ENCODE measurements at regions of chr19 and their contacts with region 1.

Region 1: DNA sequence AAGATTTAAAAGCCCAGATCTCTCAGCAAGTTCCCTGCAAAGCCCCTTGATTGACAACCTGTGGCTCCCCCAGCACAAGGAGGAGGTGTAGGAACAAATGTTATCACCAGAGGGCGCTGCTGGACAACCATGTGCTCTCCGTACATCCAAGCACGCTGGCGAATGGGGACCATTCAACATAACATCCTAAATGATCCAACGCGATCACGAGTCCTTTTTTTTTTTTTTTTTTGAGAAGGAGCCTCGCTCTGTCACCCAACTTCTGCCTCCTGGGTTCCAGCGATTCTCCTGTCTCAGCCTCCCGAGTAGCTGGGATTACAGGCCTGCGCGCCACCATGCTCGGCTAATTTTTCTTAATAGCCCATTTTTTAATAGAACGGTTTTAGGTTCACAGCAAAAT is 52.0 kb downstream of the NWD1 start:
- DNase-seq: peak; percentile 78
- ATAC-seq: peak; percentile 99
- H3K4me3 ChIP-seq: no peak overlapping the region
- H3K27ac ChIP-seq: no peak overlapping the region
- H3K4me1 ChIP-seq: no peaks in the 10 kb centered on the region
- H3K27me3 ChIP-seq: peaks cover 10% of the 10 kb centered on the region; the same call in 1 of the 2 replicates
- CTCF ChIP-seq: peak; percentile 90
- POLR2A ChIP-seq: no peak
- RAD21 ChIP-seq: peak; percentile 92

Region 2: DNA sequence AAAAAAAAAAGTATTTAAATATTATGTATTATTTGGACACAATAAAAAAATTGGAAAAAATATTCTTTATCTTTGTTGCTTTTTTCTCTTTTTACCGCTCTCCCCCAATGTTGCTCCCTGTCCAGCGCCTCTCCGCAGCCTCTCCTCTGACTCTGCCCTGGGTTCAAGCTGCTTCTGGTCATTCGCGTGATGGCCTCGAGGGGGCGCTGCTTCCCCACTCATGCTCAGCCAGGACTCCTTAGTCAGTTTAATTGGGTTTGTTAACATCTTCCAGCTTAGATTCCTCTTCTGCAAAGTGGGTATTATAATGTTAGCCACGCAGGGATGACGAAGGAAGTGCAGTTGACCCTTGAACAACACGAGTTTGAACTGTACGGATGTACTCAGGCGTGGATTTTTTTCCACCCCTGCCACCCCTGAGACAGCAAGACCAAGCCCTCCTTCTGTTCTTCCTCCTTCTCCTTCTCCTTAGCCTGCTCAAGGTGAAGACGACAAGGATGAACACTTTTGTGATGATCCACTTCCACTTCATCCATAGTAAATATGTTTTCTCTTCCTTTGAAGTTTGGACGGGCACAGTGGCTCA is 56.8 kb before region 1 on chr19:
- CTCF ChIA-PET with region 1: no interaction called
- POLR2A ChIA-PET with region 1: no interaction called
- dilution Hi-C with region 1: no loop called
- in situ Hi-C with region 1: no loop called
- intact Hi-C with region 1: loop called (anchors 1 kb)
- DNase-seq: peak; percentile 24
- ATAC-seq: peak; percentile 82
- H3K4me3 ChIP-seq: no peak overlapping the region
- H3K27ac ChIP-seq: no peak overlapping the region
- H3K4me1 ChIP-seq: no peaks in the 10 kb centered on the region
- H3K27me3 ChIP-seq: peaks cover 3% of the 10 kb centered on the region; the same call in 1 of the 2 replicates
- CTCF ChIP-seq: peak; percentile 71
- POLR2A ChIP-seq: no peak
- RAD21 ChIP-seq: peak; percentile 77

Region 3: GRCh38 chr19:16897154-16897855 is 125.7 kb after region 1 on chr19:
- CTCF ChIA-PET with region 1: no interaction called
- POLR2A ChIA-PET with region 1: no interaction called
- dilution Hi-C with region 1: no loop called
- in situ Hi-C with region 1: no loop called
- intact Hi-C with region 1: loop called (anchors 1 kb)
- DNase-seq: peak; percentile 91
- ATAC-seq: peak; percentile 93
- H3K4me3 ChIP-seq: peak overlapping the region; percentile 87
- H3K27ac ChIP-seq: peak overlapping the region; percentile 54
- H3K4me1 ChIP-seq: no peaks in the 10 kb centered on the region
- H3K27me3 ChIP-seq: peaks cover 10% of the 10 kb centered on the region; the same call in 1 of the 2 replicates
- CTCF ChIP-seq: no peak
- POLR2A ChIP-seq: no peak
- RAD21 ChIP-seq: no peak

Region 4: DNA sequence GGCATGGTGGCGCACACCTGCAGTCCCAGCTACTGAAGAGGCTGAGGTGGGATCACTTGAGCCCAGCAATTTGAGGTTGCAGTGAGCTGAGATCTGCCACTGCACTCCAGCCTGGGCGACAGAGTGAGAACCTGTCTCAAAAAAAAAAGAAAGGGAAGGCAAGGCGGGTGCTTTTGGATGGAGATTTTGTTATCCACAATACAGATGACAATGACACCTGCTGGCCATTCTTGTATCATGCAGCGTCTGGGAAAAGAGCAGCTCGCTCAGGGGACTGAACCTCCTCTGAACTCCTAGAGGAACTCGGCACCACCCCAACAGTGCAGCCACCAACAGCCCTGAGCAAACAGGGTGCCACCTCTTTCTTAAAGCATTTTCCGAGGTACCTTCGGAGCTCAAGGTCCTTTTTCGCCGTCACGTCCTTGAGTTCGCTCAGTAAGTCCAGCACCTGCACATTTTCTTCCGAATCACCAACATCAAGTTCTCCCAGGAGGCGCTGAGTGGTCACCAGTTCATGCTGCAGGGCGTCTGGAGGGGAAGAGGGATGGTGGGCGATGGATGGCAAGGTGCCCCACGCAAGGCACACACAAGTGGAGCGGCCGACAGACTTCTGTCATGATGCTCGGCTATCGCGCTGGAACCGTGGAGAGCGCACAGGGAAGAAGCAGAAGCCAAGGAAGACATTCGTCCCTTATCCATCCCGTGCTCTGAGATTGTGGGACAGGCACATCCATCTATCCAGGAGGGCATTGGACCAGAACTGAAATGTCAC is 281.0 kb after region 1 on chr19:
- CTCF ChIA-PET with region 1: interaction called, 6 read pairs
- POLR2A ChIA-PET with region 1: no interaction called
- dilution Hi-C with region 1: no loop called
- in situ Hi-C with region 1: loop called (anchors 5 kb)
- intact Hi-C with region 1: loop called (anchors 1 kb)
- DNase-seq: peak; percentile 59
- ATAC-seq: peak; percentile 72
- H3K4me3 ChIP-seq: no peak overlapping the region
- H3K27ac ChIP-seq: no peak overlapping the region
- H3K4me1 ChIP-seq: peaks cover 6% of the 10 kb centered on the region
- H3K27me3 ChIP-seq: no peaks in the 10 kb centered on the region
- CTCF ChIP-seq: peak; percentile 63
- POLR2A ChIP-seq: no peak
- RAD21 ChIP-seq: peak; percentile 68

Region 5: GRCh38 chr19:17282488-17283255 is 511.1 kb after region 1 on chr19:
- CTCF ChIA-PET with region 1: no interaction called
- POLR2A ChIA-PET with region 1: no interaction called
- dilution Hi-C with region 1: no loop called
- in situ Hi-C with region 1: no loop called
- intact Hi-C with region 1: loop called (anchors 10 kb)
- DNase-seq: peak; percentile 62
- ATAC-seq: peak; percentile 96
- H3K4me3 ChIP-seq: peak overlapping the region; percentile 32
- H3K27ac ChIP-seq: no peak overlapping the region
- H3K4me1 ChIP-seq: no peaks in the 10 kb centered on the region
- H3K27me3 ChIP-seq: no peaks in the 10 kb centered on the region
- CTCF ChIP-seq: peak; percentile 91
- POLR2A ChIP-seq: no peak
- RAD21 ChIP-seq: peak; percentile 89